Endothelial cell of umbilical vein (primary cell): ENCODE measurements at regions of chr6 and their contacts with region 1.

Region 1: DNA sequence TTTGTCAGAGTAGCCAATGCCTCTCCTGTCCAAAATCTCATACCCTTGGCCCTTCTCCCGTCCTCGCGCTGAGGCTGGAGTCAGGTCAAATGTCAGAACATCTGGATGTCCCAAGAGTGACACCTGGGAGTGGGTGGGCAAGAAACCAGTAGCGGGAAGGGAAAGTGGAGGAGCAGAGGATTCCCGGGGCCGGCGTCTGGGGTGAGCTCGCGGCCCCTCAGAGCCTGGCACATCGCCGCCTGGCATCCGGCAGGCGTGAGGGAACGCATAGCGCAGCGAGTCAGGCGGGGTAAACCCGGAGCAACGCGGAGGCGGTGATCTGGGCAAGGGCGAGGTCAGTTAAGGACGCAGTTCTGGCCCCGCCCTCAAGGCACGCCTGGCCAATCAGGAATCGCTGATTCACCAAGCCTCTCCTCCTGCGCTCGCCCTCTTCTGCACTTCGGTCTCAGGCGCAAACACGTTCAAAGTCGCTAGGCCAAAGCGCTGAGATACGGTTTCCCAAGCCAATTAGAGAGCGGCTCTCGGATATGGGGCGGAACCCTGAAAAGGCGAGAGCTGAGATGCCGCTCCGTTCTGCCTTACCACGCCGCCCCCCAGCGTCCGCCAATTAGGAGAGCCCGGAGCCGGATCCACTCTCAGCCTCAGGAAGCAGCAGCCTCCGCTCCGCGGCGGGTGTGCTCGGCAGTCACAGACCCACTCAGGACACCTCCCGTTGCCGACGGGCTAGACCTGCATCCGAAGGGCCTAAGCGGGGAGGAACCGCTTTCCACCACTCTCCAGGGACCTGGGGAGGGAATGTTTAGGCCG is 22.5 kb downstream of the VPS52 start:
- DNase-seq: peak; percentile 100
- H3K4me3 ChIP-seq: peak overlapping the region; percentile 18 to 69 (median 38)
- H3K27ac ChIP-seq: peak overlapping the region; percentile 72
- H3K4me1 ChIP-seq: peaks cover 23% of the 10 kb centered on the region
- H3K27me3 ChIP-seq: peaks cover 0 to 2% of the 10 kb centered on the region in 2 experiments
- CTCF ChIP-seq: peak in 1 of 2 donors; percentile 21
- POLR2A ChIP-seq: peak; percentile 93

Region 2: GRCh38 chr6:32885698-32886286 is 363.3 kb before region 1 on chr6:
- CTCF ChIA-PET with region 1: interaction called, 5 read pairs
- POLR2A ChIA-PET with region 1: no interaction called
- dilution Hi-C with region 1: no loop called
- intact Hi-C with region 1: loop called (anchors 10 kb)
- DNase-seq: peak; percentile 72
- H3K4me3 ChIP-seq: no peak overlapping the region
- H3K27ac ChIP-seq: no peak overlapping the region
- H3K4me1 ChIP-seq: peaks cover under 1% of the 10 kb centered on the region
- H3K27me3 ChIP-seq: peaks cover 28 to 30% of the 10 kb centered on the region in 2 experiments
- CTCF ChIP-seq: peak; percentile 34
- POLR2A ChIP-seq: no peak

Region 3: GRCh38 chr6:33014841-33015634 is 234.1 kb before region 1 on chr6:
- CTCF ChIA-PET with region 1: interaction called, 70 read pairs
- POLR2A ChIA-PET with region 1: no interaction called
- dilution Hi-C with region 1: no loop called
- intact Hi-C with region 1: loop called (anchors 1 kb)
- DNase-seq: peak; percentile 85
- H3K4me3 ChIP-seq: no peak overlapping the region
- H3K27ac ChIP-seq: no peak overlapping the region
- H3K4me1 ChIP-seq: peaks cover 8% of the 10 kb centered on the region
- H3K27me3 ChIP-seq: peaks cover 23 to 30% of the 10 kb centered on the region in 2 experiments
- CTCF ChIP-seq: peak; percentile 56 to 57
- POLR2A ChIP-seq: no peak

Region 4: DNA sequence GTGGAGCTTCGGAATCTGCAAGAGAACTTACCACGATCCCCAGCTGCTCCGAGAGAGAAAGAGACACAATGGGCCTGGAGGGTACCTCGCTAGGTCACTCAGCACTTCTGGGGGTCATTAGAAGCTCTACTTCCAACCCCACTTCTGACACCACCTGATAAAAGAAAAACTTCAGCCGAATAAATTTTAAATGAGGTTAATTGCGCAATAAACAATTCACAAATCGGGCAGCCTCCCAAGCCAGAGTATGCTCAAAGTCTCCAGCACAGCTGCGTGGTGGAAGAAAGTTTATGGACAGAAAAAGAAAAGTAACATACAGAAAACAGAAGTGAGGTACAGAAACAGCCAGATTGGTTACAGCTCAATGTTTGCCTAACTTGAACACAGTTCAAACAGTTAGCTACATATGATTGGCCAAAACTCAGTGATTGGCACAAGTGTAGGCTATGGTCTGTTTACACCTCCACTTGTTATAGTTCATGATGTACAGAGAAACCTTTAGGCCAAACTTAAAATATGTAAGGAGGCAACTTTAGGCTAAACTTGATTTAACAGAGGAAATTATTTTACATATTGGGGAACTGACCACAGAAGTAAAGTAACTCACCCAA is 109.4 kb before region 1 on chr6:
- CTCF ChIA-PET with region 1: interaction called, 11 read pairs
- POLR2A ChIA-PET with region 1: no interaction called
- dilution Hi-C with region 1: no loop called
- intact Hi-C with region 1: no loop called
- DNase-seq: no peak
- H3K4me3 ChIP-seq: no peak overlapping the region
- H3K27ac ChIP-seq: no peak overlapping the region
- H3K4me1 ChIP-seq: no peaks in the 10 kb centered on the region
- H3K27me3 ChIP-seq: peaks cover 8 to 20% of the 10 kb centered on the region in 2 experiments
- CTCF ChIP-seq: no peak
- POLR2A ChIP-seq: no peak

Region 5: GRCh38 chr6:33172688-33173534 is 76.2 kb before region 1 on chr6:
- CTCF ChIA-PET with region 1: interaction called, 19 read pairs
- POLR2A ChIA-PET with region 1: no interaction called
- dilution Hi-C with region 1: no loop called
- intact Hi-C with region 1: no loop called
- DNase-seq: no peak
- H3K4me3 ChIP-seq: no peak overlapping the region
- H3K27ac ChIP-seq: no peak overlapping the region
- H3K4me1 ChIP-seq: no peaks in the 10 kb centered on the region
- H3K27me3 ChIP-seq: no peaks in the 10 kb centered on the region
- CTCF ChIP-seq: peak; percentile 26 to 34
- POLR2A ChIP-seq: no peak

Region 6: GRCh38 chr6:33213166-33213988 is 35.8 kb before region 1 on chr6:
- CTCF ChIA-PET with region 1: interaction called, 29 read pairs
- POLR2A ChIA-PET with region 1: interaction called, 4 read pairs
- dilution Hi-C with region 1: no loop called
- intact Hi-C with region 1: loop called (anchors 1 kb)
- DNase-seq: no peak
- H3K4me3 ChIP-seq: peak overlapping the region; percentile 26 to 48 (median 30)
- H3K27ac ChIP-seq: no peak overlapping the region
- H3K4me1 ChIP-seq: peaks cover 8% of the 10 kb centered on the region
- H3K27me3 ChIP-seq: peaks cover 3 to 7% of the 10 kb centered on the region in 2 experiments
- CTCF ChIP-seq: no peak
- POLR2A ChIP-seq: peak; percentile 66

Region 7: GRCh38 chr6:33288921-33289748 is 40.0 kb after region 1 on chr6 and contains the starts of genes PFDN6 and WDR46:
- CTCF ChIA-PET with region 1: no interaction called
- POLR2A ChIA-PET with region 1: no interaction called
- dilution Hi-C with region 1: no loop called
- intact Hi-C with region 1: no loop called
- DNase-seq: peak; percentile 96
- H3K4me3 ChIP-seq: peak within 1 kb of the TSS; percentile 59 to 96 (median 88)
- H3K27ac ChIP-seq: peak within 1 kb of the TSS; percentile 16
- H3K4me1 ChIP-seq: peaks cover 13% of the 10 kb centered on the region
- H3K27me3 ChIP-seq: no peaks in the 10 kb centered on the region
- CTCF ChIP-seq: no peak
- POLR2A ChIP-seq: peak; percentile 81
- total RNA-seq, gene PFDN6: 52.3 and 63.5 TPM in 2 replicates
- total RNA-seq, gene WDR46: 66.9 and 71.2 TPM in 2 replicates

Region 8: DNA sequence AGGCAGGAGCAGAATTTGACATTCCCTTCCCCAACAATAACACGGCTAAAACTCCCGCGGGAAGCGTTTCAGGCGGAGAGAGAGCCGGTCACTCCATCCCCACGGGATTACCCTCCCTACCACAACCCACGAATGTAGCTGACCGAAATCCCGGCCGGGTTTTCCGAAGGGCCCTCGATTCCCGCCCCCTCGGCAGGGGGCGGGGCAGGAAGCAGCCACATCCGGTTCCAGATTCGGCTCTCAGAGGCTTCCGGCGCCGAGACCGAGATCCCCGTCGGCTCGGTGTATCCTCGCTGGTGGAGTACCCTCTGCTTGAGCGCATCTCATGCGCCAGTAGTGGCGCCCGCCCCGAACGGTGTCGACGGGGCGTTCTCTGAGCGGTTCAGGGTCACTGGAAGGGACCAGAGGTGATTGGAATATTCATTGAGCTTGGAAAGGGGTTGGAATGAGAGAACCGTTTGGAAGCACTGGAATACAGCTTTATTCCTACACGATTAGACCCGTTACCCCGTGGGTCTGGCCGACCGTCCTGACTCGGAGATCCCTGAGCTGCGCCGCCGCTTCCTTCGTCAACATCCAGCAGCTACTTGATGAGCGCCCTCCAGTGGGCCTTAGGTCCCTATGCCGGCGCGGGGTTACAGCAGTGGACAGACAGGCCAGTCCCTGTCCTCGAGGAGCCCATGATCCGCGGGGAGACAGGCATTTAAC is 50.3 kb after region 1 on chr6:
- CTCF ChIA-PET with region 1: interaction called, 14 read pairs
- POLR2A ChIA-PET with region 1: interaction called, 3 read pairs
- dilution Hi-C with region 1: no loop called
- intact Hi-C with region 1: no loop called
- DNase-seq: peak; percentile 88
- H3K4me3 ChIP-seq: peak overlapping the region; percentile 55 to 82 (median 67)
- H3K27ac ChIP-seq: peak overlapping the region; percentile 80
- H3K4me1 ChIP-seq: peaks cover 13% of the 10 kb centered on the region
- H3K27me3 ChIP-seq: no peaks in the 10 kb centered on the region
- CTCF ChIP-seq: peak; percentile 70 to 84
- POLR2A ChIP-seq: peak; percentile 98

Region 9: GRCh38 chr6:33477864-33478263 is 228.7 kb after region 1 on chr6:
- CTCF ChIA-PET with region 1: no interaction called
- POLR2A ChIA-PET with region 1: no interaction called
- dilution Hi-C with region 1: no loop called
- intact Hi-C with region 1: no loop called
- DNase-seq: no peak
- H3K4me3 ChIP-seq: no peak overlapping the region
- H3K27ac ChIP-seq: no peak overlapping the region
- H3K4me1 ChIP-seq: no peaks in the 10 kb centered on the region
- H3K27me3 ChIP-seq: peaks cover 4 to 5% of the 10 kb centered on the region in 2 experiments
- CTCF ChIP-seq: no peak
- POLR2A ChIP-seq: no peak